ENCODE measurements at regions of chr17 and their contacts with region 1.

Region 1: GRCh38 chr17:64306850-64307463 is 43.9 kb upstream of the TEX2 start:
- DNase-seq: no peak
- ATAC-seq: peak; percentile 83
- H3K4me3 ChIP-seq: no peak overlapping the region
- H3K27ac ChIP-seq: no peak overlapping the region
- H3K4me1 ChIP-seq: no peaks in the 10 kb centered on the region
- H3K27me3 ChIP-seq: no peaks in the 10 kb centered on the region
- CTCF ChIP-seq: peak; percentile 64 to 86 (median 84)
- EP300 ChIP-seq: no peak
- POLR2A ChIP-seq: no peak
- RAD21 ChIP-seq: peak; percentile 68

Region 2: DNA sequence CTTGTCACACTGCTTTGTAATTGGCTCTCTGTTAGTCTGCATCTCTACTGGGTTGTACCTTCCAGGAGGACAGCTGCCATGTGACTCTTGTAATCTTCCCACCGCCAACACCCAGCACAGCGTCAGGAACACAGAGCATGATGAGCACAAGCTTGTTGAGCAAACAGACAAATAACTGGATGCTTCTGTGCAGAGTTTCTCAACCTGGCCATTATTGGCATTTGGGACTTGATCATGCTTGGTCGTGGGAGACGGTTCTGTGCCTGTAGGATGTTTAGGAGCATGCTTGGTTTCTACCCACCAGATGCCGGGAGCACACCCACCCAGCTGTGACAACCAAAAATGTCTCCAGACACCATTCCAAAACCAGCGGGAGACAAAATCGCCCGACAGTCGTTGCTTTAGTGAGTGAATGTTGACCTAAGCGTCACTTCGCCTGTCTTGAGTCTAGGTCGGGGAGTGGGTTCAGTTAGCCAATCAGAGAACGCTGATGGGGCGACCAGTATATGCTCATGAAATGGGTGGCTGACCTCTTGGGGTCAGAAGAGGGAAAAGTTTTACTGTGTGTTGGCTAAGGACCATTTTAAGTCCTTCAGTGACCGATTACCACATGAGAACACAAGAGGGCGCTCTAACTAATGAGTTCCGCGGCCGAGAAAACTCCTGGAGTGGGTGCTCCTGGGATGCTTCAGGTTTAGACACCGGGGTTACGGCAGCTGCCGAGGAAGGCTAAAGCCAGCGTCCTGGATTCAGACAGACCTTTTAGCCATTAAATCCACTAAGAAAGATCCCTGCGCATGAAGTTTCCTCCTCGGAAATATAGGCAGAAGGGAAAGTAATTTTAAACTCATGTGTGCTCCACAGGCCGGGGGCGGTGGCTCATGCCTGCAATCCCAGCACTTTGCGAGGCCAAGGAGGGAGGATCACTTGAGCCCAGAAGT is 13.9 kb after region 1 on chr17:
- CTCF ChIA-PET with region 1: interaction called, 33 read pairs
- POLR2A ChIA-PET with region 1: interaction called, 4 read pairs
- RAD21 ChIA-PET with region 1: interaction called, 4 read pairs
- SMC1A ChIA-PET with region 1: interaction called, 8 read pairs
- in situ Hi-C with region 1: no loop called
- intact Hi-C with region 1: no loop called
- DNase-seq: no peak
- ATAC-seq: peak; percentile 82
- H3K4me3 ChIP-seq: no peak overlapping the region
- H3K27ac ChIP-seq: no peak overlapping the region
- H3K4me1 ChIP-seq: no peaks in the 10 kb centered on the region
- H3K27me3 ChIP-seq: no peaks in the 10 kb centered on the region; a peak in 1 of 4 replicates
- CTCF ChIP-seq: peak; percentile 71 to 78 (median 75)
- EP300 ChIP-seq: no peak
- POLR2A ChIP-seq: no peak
- RAD21 ChIP-seq: peak; percentile 84

Measured in GM12878 (cell line).